ENCODE measurements at regions of chr12 and their contacts with region 1.

Region 1: DNA sequence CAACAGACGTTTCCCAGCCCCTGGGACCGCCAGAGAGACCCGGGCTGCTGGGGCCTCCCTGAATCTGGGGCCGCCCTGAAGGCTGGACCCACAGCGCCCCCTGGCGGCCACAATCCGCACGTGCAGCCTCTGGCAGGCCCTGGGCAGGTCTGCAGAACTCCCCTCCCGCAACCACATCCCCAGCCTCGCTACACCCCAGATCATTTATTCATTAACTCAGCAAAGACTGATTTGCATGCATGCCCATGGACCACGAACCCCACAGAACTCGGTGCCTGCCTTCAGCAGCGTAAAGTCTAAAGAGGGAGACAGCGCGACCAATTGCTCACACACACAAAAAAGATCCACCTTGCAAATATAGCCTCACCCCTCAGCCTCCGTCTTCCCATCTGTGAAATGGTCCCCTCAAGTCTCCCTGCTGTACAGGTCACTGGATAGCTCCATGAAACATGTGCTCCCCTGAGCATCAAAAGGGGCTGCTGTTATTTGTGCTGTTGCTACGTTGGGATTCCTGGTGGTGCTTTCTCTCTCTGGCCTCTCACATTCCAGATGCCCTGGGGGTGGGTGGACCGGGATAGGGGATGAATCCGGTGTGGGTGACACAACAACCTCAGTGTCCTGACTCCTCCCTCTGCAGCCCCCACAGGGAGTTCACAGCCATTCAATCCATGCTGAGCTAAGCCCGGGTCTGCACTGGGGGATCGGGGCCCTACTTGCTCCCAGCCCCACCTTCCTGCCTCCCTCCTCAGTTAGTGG is 96.4 kb downstream of the SCARB1 start:
- DNase-seq: peak; percentile 76 to 80 (median 79)
- H3K4me3 ChIP-seq: no peak overlapping the region
- H3K4me3 Mint-ChIP-seq: peak overlapping the region in 1 of 2 donors; percentile 12
- H3K27ac ChIP-seq: peak overlapping the region; percentile 77 to 82
- H3K27ac Mint-ChIP-seq: peak overlapping the region; percentile 80 to 95 (median 89)
- H3K4me1 ChIP-seq: peaks cover 78 to 81% of the 10 kb centered on the region in 2 donors
- H3K4me1 Mint-ChIP-seq: peaks cover 82% of the 10 kb centered on the region
- H3K27me3 ChIP-seq: no peaks in the 10 kb centered on the region
- H3K27me3 Mint-ChIP-seq: peaks cover 2 to 10% (median 5%) of the 10 kb centered on the region in 3 donors
- CTCF ChIP-seq: peak; percentile 100

Region 2: GRCh38 chr12:124036674-124037109 is 730.6 kb before region 1 on chr12:
- intact Hi-C with region 1: loop called in 1 of 2 experiments (anchors 10 kb)
- DNase-seq: peak; percentile 34 to 55 (median 44)
- H3K4me3 ChIP-seq: no peak overlapping the region
- H3K4me3 Mint-ChIP-seq: no peak overlapping the region
- H3K27ac ChIP-seq: no peak overlapping the region
- H3K27ac Mint-ChIP-seq: peak overlapping the region in 1 of 7 donors; percentile 19
- H3K4me1 ChIP-seq: peaks cover 0 to 4% of the 10 kb centered on the region in 2 donors
- H3K4me1 Mint-ChIP-seq: peaks cover 16% of the 10 kb centered on the region
- H3K27me3 ChIP-seq: no peaks in the 10 kb centered on the region
- H3K27me3 Mint-ChIP-seq: peaks cover 0 to 3% (median 3%) of the 10 kb centered on the region in 3 donors
- CTCF ChIP-seq: peak; percentile 95

Region 3: DNA sequence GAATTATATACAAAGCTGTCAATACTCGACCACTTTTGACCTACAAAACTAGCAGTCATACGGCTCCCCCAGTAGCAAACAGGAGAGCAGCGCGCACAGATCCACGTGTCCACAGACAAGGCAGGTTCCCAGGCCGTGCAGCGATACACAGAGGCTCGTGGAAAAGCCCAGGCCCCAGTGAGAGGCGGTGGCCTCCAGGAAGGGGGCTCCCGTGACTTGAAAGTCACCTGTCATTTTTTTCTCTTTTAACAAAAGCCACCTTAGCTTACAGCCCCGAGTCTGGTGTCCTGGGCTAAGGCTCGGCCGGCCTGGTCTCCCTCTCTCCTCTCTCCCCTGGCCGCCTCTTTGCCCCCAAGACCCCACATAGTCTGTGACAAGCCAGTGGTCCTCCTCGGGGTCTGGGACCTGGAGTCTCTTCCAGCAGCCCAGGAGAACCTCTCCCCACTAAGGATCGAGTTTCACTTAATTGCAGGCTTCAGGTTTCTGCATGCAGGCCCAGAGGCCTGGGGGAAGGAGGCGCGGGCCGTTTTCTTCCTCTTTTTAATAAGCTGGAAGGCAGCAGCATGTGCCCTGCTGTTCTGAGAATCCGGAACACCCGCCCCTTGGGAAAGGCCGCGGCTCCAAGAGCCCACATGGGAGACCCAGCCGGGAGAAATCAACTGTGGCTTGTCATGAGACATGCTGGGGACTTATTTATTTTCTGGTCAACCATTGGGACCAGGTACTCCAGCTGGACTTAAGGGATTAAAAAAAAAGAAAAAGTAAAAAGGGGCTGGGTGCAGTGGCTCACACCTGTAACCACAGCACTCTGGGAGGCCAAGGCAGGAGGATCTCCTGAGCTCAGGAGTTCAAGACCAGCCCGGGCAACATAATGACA is 215.7 kb before region 1 on chr12:
- intact Hi-C with region 1: loop called in 1 of 2 experiments (anchors 5 kb)
- DNase-seq: peak; percentile 67 to 87 (median 82)
- H3K4me3 ChIP-seq: peak overlapping the region in 1 of 3 experiments; percentile 46
- H3K4me3 Mint-ChIP-seq: peak overlapping the region; percentile 65 to 76
- H3K27ac ChIP-seq: peak overlapping the region; percentile 58 to 71
- H3K27ac Mint-ChIP-seq: peak overlapping the region; percentile 83 to 95 (median 94)
- H3K4me1 ChIP-seq: peaks cover 68 to 86% of the 10 kb centered on the region in 2 donors
- H3K4me1 Mint-ChIP-seq: peaks cover 88% of the 10 kb centered on the region
- H3K27me3 ChIP-seq: no peaks in the 10 kb centered on the region
- H3K27me3 Mint-ChIP-seq: peaks cover 0 to 2% (median 0%) of the 10 kb centered on the region in 3 donors
- CTCF ChIP-seq: no peak

Region 4: DNA sequence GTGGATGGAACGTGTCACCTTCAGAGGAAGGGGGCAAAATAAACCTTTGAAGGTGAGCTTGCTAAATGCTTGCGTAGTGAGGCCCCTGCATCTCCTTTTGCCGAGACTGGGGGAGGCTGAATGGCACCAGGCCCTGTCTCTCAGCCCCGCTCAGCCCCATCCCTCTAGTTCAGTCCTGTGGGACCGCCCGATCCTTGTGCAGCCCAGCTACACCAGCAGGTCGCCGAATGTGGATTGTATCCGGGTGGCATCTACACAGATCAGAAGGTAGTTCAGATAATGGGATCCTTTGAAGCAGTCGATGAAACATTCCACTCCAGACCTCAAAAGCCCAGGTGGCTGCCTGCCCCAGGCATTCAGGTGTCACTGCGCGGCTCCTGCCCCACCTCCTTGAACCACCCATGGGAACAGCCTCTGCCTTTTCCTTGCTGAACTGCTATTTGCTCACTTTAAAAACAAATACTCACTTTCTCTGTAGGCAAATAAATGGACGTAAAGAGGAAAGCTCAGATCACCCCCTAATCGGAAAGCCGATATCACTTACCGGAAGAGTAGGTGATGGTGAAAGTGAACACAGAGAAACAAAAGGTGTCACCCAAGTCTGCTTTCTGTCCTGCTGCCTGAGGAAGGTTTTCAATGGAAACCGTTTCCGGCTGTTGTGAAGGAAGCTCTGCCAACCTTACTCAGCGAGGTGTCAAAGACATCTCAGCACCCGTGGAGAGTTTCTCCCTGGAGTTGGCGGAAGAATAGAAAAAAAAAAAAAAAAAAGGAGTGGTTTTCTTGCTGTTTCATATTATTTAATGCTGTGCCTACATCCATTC is 99.5 kb before region 1 on chr12:
- intact Hi-C with region 1: loop called in 1 of 2 experiments (anchors 5 kb)
- DNase-seq: no peak
- H3K4me3 ChIP-seq: no peak overlapping the region
- H3K4me3 Mint-ChIP-seq: no peak overlapping the region
- H3K27ac ChIP-seq: no peak overlapping the region
- H3K27ac Mint-ChIP-seq: peak overlapping the region in 1 of 7 donors; percentile 37
- H3K4me1 ChIP-seq: peaks cover 32 to 45% of the 10 kb centered on the region in 2 donors
- H3K4me1 Mint-ChIP-seq: peaks cover 38% of the 10 kb centered on the region
- H3K27me3 ChIP-seq: no peaks in the 10 kb centered on the region
- H3K27me3 Mint-ChIP-seq: peaks cover 0 to 3% (median 2%) of the 10 kb centered on the region in 3 donors
- CTCF ChIP-seq: no peak

Region 5: DNA sequence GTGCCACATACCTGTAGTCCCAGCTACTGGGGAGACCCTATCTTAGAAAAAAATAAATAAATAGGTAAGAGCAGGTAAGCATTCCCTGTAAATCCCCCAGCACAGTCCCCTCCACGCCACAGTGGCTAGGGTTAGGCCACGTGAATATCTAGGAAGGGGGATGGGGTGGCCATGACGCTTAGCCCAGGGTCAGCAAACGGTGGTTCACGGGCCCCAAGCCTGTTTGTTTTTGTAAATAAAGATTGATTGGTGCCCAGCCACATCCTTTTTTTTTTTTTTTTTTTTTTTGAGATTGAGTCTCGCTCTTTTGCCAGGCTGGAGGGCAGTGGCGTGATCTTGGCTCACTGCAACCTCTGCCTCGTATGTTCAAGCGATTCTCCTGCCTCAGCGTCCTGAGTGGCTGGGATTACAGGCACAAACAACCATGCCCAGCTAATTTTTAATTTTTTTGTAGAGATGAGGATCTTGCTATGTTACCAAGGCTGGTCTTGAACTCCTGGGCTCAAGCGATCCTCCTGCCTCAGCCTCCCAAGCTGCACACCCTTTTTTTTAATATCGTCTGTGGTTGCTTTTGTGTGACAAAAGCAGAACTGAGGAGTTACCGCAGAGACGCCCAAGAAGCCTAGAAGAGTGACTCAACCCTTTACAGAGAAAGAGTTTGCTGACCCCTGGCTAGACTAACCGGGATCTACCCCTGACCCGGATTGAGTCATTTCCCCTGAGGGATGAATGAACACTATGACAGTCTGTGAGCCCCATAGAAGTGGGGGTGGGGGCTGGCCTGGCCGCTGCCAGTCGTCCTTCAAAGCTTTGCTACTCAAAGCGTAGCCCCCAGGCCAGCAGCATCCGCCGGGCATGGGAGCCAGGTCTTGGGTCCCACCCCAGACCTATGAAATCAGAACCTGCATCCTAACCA is 86.1 kb before region 1 on chr12:
- intact Hi-C with region 1: loop called (anchors 2 to 5 kb)
- DNase-seq: peak; percentile 97 to 99 (median 99)
- H3K4me3 ChIP-seq: no peak overlapping the region
- H3K4me3 Mint-ChIP-seq: peak overlapping the region; percentile 60 to 68
- H3K27ac ChIP-seq: peak overlapping the region; percentile 60 to 91
- H3K27ac Mint-ChIP-seq: peak overlapping the region; percentile 91 to 98 (median 96)
- H3K4me1 ChIP-seq: peaks cover 73 to 80% of the 10 kb centered on the region in 2 donors
- H3K4me1 Mint-ChIP-seq: peaks cover 77% of the 10 kb centered on the region
- H3K27me3 ChIP-seq: no peaks in the 10 kb centered on the region
- H3K27me3 Mint-ChIP-seq: peaks cover 0 to 9% (median 3%) of the 10 kb centered on the region in 3 donors
- CTCF ChIP-seq: peak; percentile 40

Region 6: GRCh38 chr12:124727264-124727721 is 40.0 kb before region 1 on chr12:
- intact Hi-C with region 1: loop called (anchors 5 kb)
- DNase-seq: peak; percentile 98 to 99 (median 99)
- H3K4me3 ChIP-seq: peak overlapping the region in 1 of 3 experiments; percentile 38
- H3K4me3 Mint-ChIP-seq: peak overlapping the region in 1 of 2 donors; percentile 48
- H3K27ac ChIP-seq: peak overlapping the region; percentile 94 to 95
- H3K27ac Mint-ChIP-seq: peak overlapping the region; percentile 97 to 99 (median 98)
- H3K4me1 ChIP-seq: peaks cover 37 to 42% of the 10 kb centered on the region in 2 donors
- H3K4me1 Mint-ChIP-seq: peaks cover 47% of the 10 kb centered on the region
- H3K27me3 ChIP-seq: no peaks in the 10 kb centered on the region
- H3K27me3 Mint-ChIP-seq: peaks cover 0 to 2% (median 0%) of the 10 kb centered on the region in 3 donors
- CTCF ChIP-seq: no peak

Region 7: GRCh38 chr12:124869034-124869665 is 101.9 kb after region 1 on chr12:
- intact Hi-C with region 1: loop called in 1 of 2 experiments (anchors 5 kb)
- DNase-seq: peak; percentile 74 to 89 (median 78)
- H3K4me3 ChIP-seq: peak overlapping the region; percentile 8 to 74 (median 31)
- H3K4me3 Mint-ChIP-seq: peak overlapping the region; percentile 80 to 92
- H3K27ac ChIP-seq: peak overlapping the region; percentile 93 to 94
- H3K27ac Mint-ChIP-seq: peak overlapping the region; percentile 87 to 98 (median 96)
- H3K4me1 ChIP-seq: peaks cover 42 to 45% of the 10 kb centered on the region in 2 donors
- H3K4me1 Mint-ChIP-seq: peaks cover 48% of the 10 kb centered on the region
- H3K27me3 ChIP-seq: no peaks in the 10 kb centered on the region
- H3K27me3 Mint-ChIP-seq: peaks cover 0 to 2% (median 0%) of the 10 kb centered on the region in 3 donors
- CTCF ChIP-seq: no peak